Testis (tissue), 5 donors: ENCODE measurements at regions of chr6 and their contacts with region 1.

Region 1: DNA sequence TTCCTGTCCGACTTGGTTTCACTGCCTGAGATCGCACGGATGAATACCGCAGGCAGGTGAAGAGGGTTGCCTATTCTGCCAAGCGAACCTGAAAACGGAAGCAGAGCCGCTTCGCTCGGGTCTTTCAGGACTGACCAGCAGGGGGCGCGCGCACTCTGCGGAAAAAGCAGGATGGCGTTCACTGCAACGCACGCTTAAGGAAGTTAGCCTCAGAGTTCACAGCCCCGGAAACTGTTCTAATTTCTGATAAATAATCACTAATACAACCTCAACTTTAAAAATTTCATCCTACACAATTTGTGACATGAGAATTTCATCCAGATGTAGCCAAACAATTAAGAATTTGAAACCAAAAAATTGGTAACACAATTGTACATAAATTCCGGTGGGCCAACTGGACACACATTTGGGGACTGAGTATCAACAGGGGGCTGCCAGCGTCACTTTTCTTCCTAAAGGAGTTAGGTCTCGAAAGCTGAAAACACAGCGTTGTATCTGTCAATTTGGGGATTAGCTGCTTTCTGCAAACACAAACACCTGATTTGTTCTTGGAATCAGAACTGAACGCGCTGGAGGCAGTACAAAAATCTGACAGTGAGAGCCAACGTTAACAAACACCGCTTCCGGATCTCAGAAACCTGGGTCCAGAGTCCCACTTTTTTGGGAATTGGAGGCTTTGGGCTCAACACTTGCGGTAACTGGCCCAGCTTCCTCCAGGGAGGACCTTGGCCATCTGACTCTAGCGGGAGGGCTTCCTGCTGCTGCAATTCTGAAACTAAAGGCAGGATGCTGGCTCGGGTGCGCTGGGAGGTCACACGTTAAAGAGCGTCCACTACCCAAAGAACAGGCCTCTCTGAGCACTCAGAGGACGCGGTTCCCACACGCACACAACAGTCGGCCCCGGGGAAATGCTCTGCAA is 8.8 kb downstream of the PXDC1 start:
- DNase-seq: peak; percentile 90
- H3K4me3 ChIP-seq: no peak overlapping the region
- H3K27ac ChIP-seq: peak overlapping the region; percentile 12 to 42
- H3K4me1 ChIP-seq: peaks cover 11% of the 10 kb centered on the region
- H3K27me3 ChIP-seq: no peaks in the 10 kb centered on the region
- CTCF ChIP-seq: peak; percentile 96 to 98 (median 97)
- POLR2A ChIP-seq: no peak

Region 2: DNA sequence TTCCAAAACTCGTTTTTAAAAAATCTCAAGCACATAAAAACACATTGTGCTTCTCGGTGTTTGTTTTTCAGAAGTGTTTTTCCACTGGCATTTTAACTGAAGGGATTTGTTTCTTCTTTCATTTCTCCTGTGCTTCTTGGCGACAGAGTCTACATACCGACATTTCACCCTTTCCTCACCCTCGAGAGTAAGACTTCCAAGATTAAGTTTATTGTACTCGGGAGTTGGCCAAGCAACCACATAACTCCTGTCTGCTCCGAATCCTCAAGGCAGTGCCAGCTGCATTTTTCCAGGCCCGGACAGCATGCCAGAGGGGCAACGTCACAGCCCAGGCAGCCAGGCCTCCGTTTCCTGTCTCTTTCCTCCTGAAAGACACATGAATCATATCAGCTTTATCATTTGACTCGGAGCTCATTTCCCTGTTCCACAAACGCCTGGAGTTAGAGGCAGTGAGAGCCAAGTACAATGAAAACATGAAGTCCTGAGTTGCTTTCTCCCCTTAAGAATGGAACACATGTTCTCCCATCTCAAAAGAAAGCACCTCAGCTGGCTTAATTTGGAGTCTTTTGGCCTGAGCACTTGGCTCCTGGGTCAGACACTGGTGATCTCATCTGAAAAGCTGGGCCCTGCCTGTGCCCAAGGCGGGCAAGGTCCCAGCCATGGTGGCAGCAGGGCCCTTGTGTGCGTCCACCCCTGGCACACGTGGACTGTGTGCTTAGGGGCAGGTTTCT is 83.3 kb after region 1 on chr6:
- intact Hi-C with region 1: loop called (anchors 10 kb)
- DNase-seq: peak; percentile 73
- H3K4me3 ChIP-seq: no peak overlapping the region
- H3K27ac ChIP-seq: peak overlapping the region; percentile 56 to 86
- H3K4me1 ChIP-seq: peaks cover 22% of the 10 kb centered on the region
- H3K27me3 ChIP-seq: no peaks in the 10 kb centered on the region
- CTCF ChIP-seq: no peak
- POLR2A ChIP-seq: no peak

Region 3: GRCh38 chr6:3990692-3991501 is 248.2 kb after region 1 on chr6:
- intact Hi-C with region 1: loop called (anchors 10 kb)
- DNase-seq: peak; percentile 92
- H3K4me3 ChIP-seq: peak overlapping the region; percentile 31 to 40
- H3K27ac ChIP-seq: peak overlapping the region in 1 of 2 donors; percentile 57
- H3K4me1 ChIP-seq: no peaks in the 10 kb centered on the region
- H3K27me3 ChIP-seq: no peaks in the 10 kb centered on the region
- CTCF ChIP-seq: peak; percentile 57 to 62 (median 57)
- POLR2A ChIP-seq: no peak

Region 4: GRCh38 chr6:4155848-4156466 is 413.3 kb after region 1 on chr6:
- intact Hi-C with region 1: loop called (anchors 5 kb)
- DNase-seq: peak; percentile 91
- H3K4me3 ChIP-seq: no peak overlapping the region
- H3K27ac ChIP-seq: no peak overlapping the region
- H3K4me1 ChIP-seq: no peaks in the 10 kb centered on the region
- H3K27me3 ChIP-seq: no peaks in the 10 kb centered on the region
- CTCF ChIP-seq: peak; percentile 64 to 86 (median 75)
- POLR2A ChIP-seq: no peak